Vagina (tissue), 2 donors: ENCODE measurements at regions of chr12 and their contacts with region 1.

Region 1: GRCh38 chr12:12286441-12286840 is 19.6 kb upstream of the LRP6 start:
- DNase-seq: no peak
- H3K4me3 ChIP-seq: no peak overlapping the region
- H3K27ac ChIP-seq: no peak overlapping the region
- H3K4me1 ChIP-seq: peaks cover 15% of the 10 kb centered on the region
- H3K27me3 ChIP-seq: no peaks in the 10 kb centered on the region
- CTCF ChIP-seq: no peak
- POLR2A ChIP-seq: no peak

Region 2: DNA sequence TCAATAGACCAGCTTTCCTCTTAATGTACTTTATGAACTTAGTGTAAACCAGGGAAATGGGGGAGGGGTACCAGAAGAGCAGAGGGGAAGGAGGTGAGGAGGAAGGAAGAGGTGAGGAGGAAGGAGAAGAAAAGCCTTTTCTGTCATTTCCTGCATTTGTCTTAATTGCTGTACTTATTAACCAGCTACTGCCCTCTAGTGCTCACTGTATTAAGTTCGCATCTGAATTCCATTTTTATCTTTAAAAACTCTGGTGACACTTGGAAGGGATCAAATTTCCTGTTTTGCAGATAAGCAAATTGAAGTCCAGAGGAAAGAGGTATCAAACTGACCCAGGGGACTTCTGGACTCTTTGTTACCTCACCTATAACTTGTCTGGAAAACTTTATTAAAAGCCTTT is 41.4 kb after region 1 on chr12:
- intact Hi-C with region 1: no loop called
- DNase-seq: no peak
- H3K4me3 ChIP-seq: no peak overlapping the region
- H3K27ac ChIP-seq: no peak overlapping the region
- H3K4me1 ChIP-seq: peaks cover 24% of the 10 kb centered on the region
- H3K27me3 ChIP-seq: no peaks in the 10 kb centered on the region
- CTCF ChIP-seq: peak; percentile 39 to 59 (median 43)
- POLR2A ChIP-seq: no peak

Region 3: DNA sequence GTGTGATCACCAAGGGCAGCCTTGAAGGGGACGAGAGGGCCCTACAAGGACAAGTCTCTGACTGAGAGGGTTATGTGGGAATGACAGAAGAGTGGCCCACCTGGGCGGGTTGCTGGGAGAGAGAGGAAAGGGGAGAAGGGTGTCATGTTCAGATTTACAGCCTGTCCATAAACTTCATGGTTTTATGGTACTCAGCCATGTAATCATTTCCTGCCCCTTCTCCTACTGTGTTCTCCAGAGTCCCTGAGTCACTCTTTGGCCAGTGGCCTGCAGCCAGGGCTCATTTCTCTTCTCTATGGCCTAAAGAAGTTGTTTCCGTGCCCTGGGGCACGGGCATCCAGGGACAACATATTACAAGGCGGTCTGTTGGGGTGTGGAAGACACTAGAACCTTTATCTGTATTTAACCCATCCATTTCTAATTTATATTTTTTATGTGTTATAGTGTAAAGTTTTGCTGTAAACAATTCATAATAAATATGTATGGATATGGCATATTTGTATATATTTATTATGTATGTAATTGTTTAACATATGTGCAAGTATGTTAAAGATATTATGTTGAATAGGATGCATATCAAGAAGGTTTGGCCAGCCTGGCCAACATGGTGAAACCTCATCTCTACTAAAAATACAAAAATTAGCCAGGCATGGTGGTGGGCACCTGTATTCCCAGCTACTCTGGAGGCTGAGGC is 553.6 kb after region 1 on chr12:
- intact Hi-C with region 1: no loop called
- DNase-seq: no peak
- H3K4me3 ChIP-seq: no peak overlapping the region
- H3K27ac ChIP-seq: no peak overlapping the region
- H3K4me1 ChIP-seq: peaks cover 10% of the 10 kb centered on the region
- H3K27me3 ChIP-seq: no peaks in the 10 kb centered on the region
- CTCF ChIP-seq: no peak
- POLR2A ChIP-seq: no peak

Region 4: GRCh38 chr12:13816394-13816793 is 1530.0 kb after region 1 on chr12:
- intact Hi-C with region 1: loop called (anchors 5 kb)
- DNase-seq: no peak
- H3K4me3 ChIP-seq: no peak overlapping the region
- H3K27ac ChIP-seq: no peak overlapping the region
- H3K4me1 ChIP-seq: peaks cover 2% of the 10 kb centered on the region
- H3K27me3 ChIP-seq: no peaks in the 10 kb centered on the region
- CTCF ChIP-seq: no peak
- POLR2A ChIP-seq: no peak